PC-9 (cell line): ENCODE measurements at regions of chr12 and their contacts with region 1.

Region 1: GRCh38 chr12:55926738-55927587 is 731 bp downstream of the PYM1 start:
- DNase-seq: peak; percentile 82 to 85
- H3K4me3 ChIP-seq: peak overlapping the region; percentile 100
- H3K27ac ChIP-seq: peak overlapping the region; percentile 83
- H3K4me1 ChIP-seq: peaks cover 39% of the 10 kb centered on the region
- H3K27me3 ChIP-seq: no peaks in the 10 kb centered on the region
- CTCF ChIP-seq: peak; percentile 86

Region 2: DNA sequence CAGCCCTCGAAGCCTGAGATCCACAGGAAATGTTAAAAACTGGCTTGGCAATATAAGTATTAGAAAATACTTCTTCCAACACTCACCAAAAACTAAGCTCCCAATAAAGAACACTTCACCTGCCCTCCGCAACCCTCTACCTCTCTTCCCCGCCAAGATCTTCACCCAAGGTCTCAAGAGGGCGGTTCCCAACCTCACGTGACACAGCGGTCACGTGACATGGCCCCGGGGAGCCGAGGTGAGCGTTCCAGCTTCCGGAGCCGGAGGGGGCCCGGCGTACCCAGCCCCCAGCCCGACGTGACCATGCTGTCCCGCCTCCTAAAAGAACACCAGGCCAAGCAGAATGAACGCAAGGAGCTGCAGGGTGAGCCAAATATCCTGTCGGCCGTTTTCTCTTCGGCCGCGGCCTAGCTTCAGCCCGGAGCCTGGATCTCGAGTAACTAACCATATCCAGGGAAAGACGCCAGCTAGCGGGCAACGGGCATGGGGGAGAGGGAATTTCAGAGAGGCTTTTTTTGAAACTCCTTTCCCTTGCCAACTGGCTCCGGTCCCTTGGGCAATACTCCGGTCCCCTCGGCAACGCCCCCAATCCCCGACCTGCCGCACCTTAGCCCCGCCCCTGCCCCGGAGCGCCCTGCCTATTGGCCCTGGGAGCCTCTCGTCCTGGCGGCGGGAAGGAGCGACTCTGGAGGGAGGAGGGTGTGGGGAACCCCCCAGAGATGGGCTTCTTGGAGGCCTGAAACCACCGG is 211.0 kb before region 1 on chr12 and contains the start of gene BLOC1S1:
- CTCF ChIA-PET with region 1: interaction called, 24 read pairs
- POLR2A ChIA-PET with region 1: no interaction called
- intact Hi-C with region 1: no loop called
- DNase-seq: peak; percentile 75 to 92
- H3K4me3 ChIP-seq: peak within 1 kb of the TSS; percentile 100
- H3K27ac ChIP-seq: peak within 1 kb of the TSS; percentile 87
- H3K4me1 ChIP-seq: peaks cover 36% of the 10 kb centered on the region
- H3K27me3 ChIP-seq: peaks cover 12% of the 10 kb centered on the region; the same call in 1 of the 2 replicates
- CTCF ChIP-seq: no peak
- total RNA-seq, gene BLOC1S1: 81.1 and 101 TPM in 2 replicates

Region 3: DNA sequence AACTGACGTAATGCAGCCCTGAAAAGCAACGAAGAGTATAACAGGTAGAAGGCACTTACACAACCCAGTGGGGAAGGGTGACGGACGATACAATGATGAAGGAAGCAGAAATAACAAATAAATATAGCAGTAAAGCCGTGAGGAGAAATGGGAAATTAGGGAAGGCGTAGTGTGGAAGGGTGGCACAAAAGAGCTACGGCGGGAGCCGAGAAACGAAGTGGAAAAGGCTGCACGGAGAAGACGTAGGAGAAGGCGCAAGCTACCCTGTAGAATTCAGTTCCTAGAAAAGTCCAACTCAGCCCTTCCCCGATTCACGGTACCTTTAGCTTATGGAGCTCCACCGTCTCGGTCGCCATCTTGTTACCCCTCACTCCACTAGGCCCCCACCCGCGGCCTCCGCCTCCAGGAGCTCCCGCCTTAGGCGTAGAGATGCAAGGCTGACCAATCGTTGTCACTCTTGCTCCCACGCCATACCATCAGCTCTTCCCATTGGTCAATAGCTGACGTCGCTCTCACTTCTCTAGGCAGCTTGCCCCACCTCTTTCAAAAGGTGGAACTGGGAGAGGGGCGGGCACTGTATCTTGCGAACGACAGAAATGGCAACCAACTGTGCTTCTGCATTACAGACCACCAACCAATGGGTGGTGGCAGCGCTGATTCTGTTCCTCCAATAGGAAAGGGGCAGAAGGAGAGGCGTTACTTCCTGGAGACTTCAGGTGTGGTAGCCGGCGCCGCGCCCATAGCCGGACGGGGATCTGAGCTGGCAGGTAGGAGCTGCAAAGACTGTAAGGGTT is 109.4 kb before region 1 on chr12 and contains the starts of genes ORMDL2 and SARNP:
- CTCF ChIA-PET with region 1: interaction called, 6 read pairs
- POLR2A ChIA-PET with region 1: interaction called, 9 read pairs
- intact Hi-C with region 1: loop called (anchors 5 kb)
- DNase-seq: peak; percentile 96 to 99
- H3K4me3 ChIP-seq: peak within 1 kb of the TSS; percentile 72
- H3K27ac ChIP-seq: peak within 1 kb of the TSS; percentile 51
- H3K4me1 ChIP-seq: peaks cover 18% of the 10 kb centered on the region
- H3K27me3 ChIP-seq: no peaks in the 10 kb centered on the region
- CTCF ChIP-seq: no peak
- total RNA-seq, gene ORMDL2: 22.5 and 22.9 TPM in 2 replicates
- total RNA-seq, gene SARNP: 65.6 and 74.8 TPM in 2 replicates

Region 4: GRCh38 chr12:55829967-55830600 is 96.9 kb before region 1 on chr12:
- CTCF ChIA-PET with region 1: interaction called, 8 read pairs
- POLR2A ChIA-PET with region 1: interaction called, 16 read pairs
- intact Hi-C with region 1: loop called (anchors 1 kb)
- DNase-seq: peak in 1 of 2 experiments; percentile 27
- H3K4me3 ChIP-seq: peak overlapping the region; percentile 96
- H3K27ac ChIP-seq: peak overlapping the region; percentile 36
- H3K4me1 ChIP-seq: peaks cover 39% of the 10 kb centered on the region
- H3K27me3 ChIP-seq: no peaks in the 10 kb centered on the region
- CTCF ChIP-seq: no peak

Region 5: GRCh38 chr12:55940065-55940732 is 13.2 kb after region 1 on chr12:
- CTCF ChIA-PET with region 1: interaction called, 30 read pairs
- POLR2A ChIA-PET with region 1: no interaction called
- intact Hi-C with region 1: loop called (anchors 1 kb)
- DNase-seq: peak; percentile 62 to 87
- H3K4me3 ChIP-seq: no peak overlapping the region
- H3K27ac ChIP-seq: 0 out of 2 replicates have a peak overlapping the region, but pooled peaks have one; percentile 16
- H3K4me1 ChIP-seq: peaks cover 27% of the 10 kb centered on the region
- H3K27me3 ChIP-seq: no peaks in the 10 kb centered on the region
- CTCF ChIP-seq: peak; percentile 86

Region 6: GRCh38 chr12:55973598-55974307 is 46.8 kb after region 1 on chr12 and contains the start of gene RAB5B:
- CTCF ChIA-PET with region 1: interaction called, 8 read pairs
- POLR2A ChIA-PET with region 1: interaction called, 3 read pairs
- intact Hi-C with region 1: loop called (anchors 2 kb)
- DNase-seq: peak; percentile 98 to 100
- H3K4me3 ChIP-seq: peak within 1 kb of the TSS; percentile 93
- H3K27ac ChIP-seq: peak within 1 kb of the TSS; percentile 86
- H3K4me1 ChIP-seq: peaks cover 27% of the 10 kb centered on the region
- H3K27me3 ChIP-seq: no peaks in the 10 kb centered on the region
- CTCF ChIP-seq: peak; percentile 70
- total RNA-seq, gene RAB5B: 98.6 and 122 TPM in 2 replicates

Region 7: GRCh38 chr12:56071648-56072047 is 144.7 kb after region 1 on chr12:
- CTCF ChIA-PET with region 1: no interaction called
- POLR2A ChIA-PET with region 1: no interaction called
- intact Hi-C with region 1: no loop called
- DNase-seq: peak in 1 of 2 experiments; percentile 58
- H3K4me3 ChIP-seq: no peak overlapping the region
- H3K27ac ChIP-seq: no peak overlapping the region
- H3K4me1 ChIP-seq: peaks cover 4% of the 10 kb centered on the region; the same call in 1 of the 2 replicates
- H3K27me3 ChIP-seq: no peaks in the 10 kb centered on the region
- CTCF ChIP-seq: no peak

Region 8: GRCh38 chr12:56590237-56590830 is 663.4 kb after region 1 on chr12:
- CTCF ChIA-PET with region 1: no interaction called
- POLR2A ChIA-PET with region 1: no interaction called
- intact Hi-C with region 1: no loop called
- DNase-seq: no peak
- H3K4me3 ChIP-seq: no peak overlapping the region
- H3K27ac ChIP-seq: no peak overlapping the region
- H3K4me1 ChIP-seq: no peaks in the 10 kb centered on the region
- H3K27me3 ChIP-seq: no peaks in the 10 kb centered on the region
- CTCF ChIP-seq: 0 out of 2 replicates have a peak, but pooled peaks have one; percentile 28

Region 9: DNA sequence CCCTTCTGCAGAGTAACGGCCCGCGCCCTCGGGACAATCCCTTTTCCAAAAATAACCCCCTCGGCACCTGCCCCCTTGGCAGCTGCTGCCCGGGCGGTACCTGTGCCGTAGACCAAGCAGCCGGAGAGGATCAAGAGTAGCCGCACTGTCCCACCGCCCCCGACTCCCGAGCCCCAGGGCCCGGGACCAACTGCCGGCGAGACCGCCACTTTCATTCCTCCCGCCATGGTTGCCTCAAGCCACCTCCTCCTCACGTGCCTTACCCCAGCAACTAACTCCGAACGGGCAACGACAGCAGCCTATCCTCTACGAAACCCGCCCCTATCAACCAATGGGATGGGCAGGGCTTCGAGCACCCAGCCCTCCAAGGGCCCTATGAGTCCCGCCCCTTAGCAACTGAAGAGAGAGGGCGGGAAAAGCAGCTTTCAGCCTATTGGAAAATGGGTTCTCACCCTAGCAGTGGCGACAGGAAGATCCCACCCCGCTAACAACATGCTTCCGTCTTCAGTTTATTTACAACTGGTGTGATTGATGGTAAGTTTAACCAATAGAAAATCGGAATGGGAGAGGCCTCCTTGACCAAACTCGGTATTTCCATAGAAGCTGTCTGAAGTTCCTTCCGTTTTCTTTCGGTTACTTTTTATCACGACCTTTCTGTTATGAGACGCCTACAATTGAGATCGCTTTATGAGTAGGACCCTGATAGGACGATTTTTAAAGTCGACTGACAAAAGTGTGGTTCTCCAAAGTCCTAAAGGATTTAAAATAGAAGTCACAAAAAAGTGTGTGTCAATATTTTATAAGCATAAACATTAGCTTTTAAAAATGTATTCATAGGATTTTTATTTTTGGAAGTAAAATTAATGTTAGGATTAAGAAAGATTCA is 1151.8 kb after region 1 on chr12 and contains the start of gene NEMP1:
- CTCF ChIA-PET with region 1: interaction called, 19 read pairs
- POLR2A ChIA-PET with region 1: no interaction called
- intact Hi-C with region 1: no loop called
- DNase-seq: peak; percentile 96 to 100
- H3K4me3 ChIP-seq: peak within 1 kb of the TSS; percentile 90
- H3K27ac ChIP-seq: peak within 1 kb of the TSS; percentile 59
- H3K4me1 ChIP-seq: peaks cover 13% of the 10 kb centered on the region
- H3K27me3 ChIP-seq: no peaks in the 10 kb centered on the region
- CTCF ChIP-seq: no peak
- total RNA-seq, gene NEMP1: 28.9 and 36.6 TPM in 2 replicates